Activated CD4-positive, alpha-beta memory T cell treated with anti-CD3 and anti-CD28 coated beads, Interleukin-2, amount 10 ng/mL, durations not matched to agents 7 days and 5 days (primary cell): ENCODE measurements at regions of chrX and their contacts with region 1.

Region 1: GRCh38 chrX:70452143-70452733 is 7.6 kb downstream of the DLG3 start:
- DNase-seq: peak; percentile 69
- H3K4me3 Mint-ChIP-seq: peak overlapping the region; percentile 90
- H3K27ac Mint-ChIP-seq: peak overlapping the region; percentile 88
- H3K4me1 Mint-ChIP-seq: peaks cover 45% of the 10 kb centered on the region
- H3K27me3 Mint-ChIP-seq: no peaks in the 10 kb centered on the region

Region 2: GRCh38 chrX:70554081-70554480 is 101.8 kb after region 1 on chrX:
- CTCF ChIA-PET with region 1: interaction called, 10 read pairs
- POLR2A ChIA-PET with region 1: no interaction called
- DNase-seq: no peak
- H3K4me3 Mint-ChIP-seq: no peak overlapping the region
- H3K27ac Mint-ChIP-seq: no peak overlapping the region
- H3K4me1 Mint-ChIP-seq: peaks cover 14% of the 10 kb centered on the region
- H3K27me3 Mint-ChIP-seq: peaks cover 2% of the 10 kb centered on the region

Region 3: DNA sequence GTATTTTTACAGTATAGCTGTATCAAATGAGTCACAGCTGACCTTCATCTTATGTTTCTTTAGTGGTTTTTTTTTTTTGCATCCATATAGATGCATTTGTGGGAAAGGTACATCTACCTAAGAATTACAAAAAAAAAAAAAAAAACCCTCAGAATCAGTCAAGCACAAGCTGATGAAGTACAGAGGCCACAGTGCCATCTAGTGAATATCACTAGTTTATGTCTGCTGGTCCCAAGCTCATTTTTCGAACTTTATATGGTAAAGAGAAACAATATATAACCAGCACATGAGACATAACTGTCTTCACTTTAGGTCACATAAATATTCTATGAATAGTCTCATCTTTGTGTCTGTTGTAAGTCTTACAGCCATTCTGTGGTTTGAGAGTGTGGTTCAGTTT is 212.5 kb after region 1 on chrX:
- CTCF ChIA-PET with region 1: interaction called, 25 read pairs
- POLR2A ChIA-PET with region 1: no interaction called
- DNase-seq: no peak
- H3K4me3 Mint-ChIP-seq: no peak overlapping the region
- H3K27ac Mint-ChIP-seq: no peak overlapping the region
- H3K4me1 Mint-ChIP-seq: peaks cover 7% of the 10 kb centered on the region
- H3K27me3 Mint-ChIP-seq: peaks cover 6% of the 10 kb centered on the region